Activated B cell treated with CpG ODN at 0.5 μM for 24 hours (primary cell): ENCODE measurements at regions of chr16 and their contacts with region 1.

Region 1: DNA sequence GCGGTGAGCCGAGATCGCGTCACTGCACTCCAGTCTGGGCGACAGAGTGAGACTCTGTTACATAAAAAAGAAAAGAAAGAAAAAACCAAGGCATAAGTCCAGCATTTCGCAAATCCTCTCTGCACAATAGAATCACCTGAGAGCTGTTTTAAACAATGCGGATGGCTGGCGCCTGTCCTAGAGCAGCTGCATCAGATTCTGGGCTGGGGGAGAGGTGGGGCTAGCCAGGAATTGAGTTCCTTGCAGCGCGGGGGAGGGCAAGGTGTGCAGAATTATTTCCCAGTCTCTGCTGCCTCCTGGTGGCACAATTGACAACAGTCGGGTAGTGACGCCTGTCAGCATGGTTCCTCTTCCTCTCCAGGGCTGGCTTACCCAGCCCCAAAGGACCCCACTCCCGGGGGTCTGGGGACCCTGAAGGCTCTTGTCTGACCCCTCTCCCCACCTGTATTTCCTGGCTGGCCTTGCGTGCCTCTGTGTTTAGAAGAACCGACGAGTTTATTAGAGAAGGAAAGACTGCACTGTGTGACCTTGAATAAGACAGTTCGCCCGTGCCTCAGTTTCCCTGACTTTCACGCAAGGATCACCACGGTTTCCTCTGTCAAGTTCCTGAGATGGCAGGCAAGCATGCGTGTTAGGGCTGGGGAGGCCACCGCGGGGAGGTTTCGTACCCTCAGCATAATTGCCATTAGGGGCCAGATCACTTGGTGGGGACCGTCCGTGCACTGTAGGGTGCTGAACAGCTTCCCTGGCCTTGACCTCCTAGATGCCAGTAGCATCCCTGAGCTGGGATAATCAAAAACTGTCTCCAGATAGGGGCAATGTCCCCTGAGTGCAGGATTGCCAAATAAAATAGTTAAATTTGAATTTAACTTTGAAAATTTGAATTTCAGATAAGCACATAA is 41.0 kb upstream of the PLCG2 start:
- DNase-seq: peak; percentile 75
- ATAC-seq: peak; percentile 58
- H3K4me3 Mint-ChIP-seq: peak overlapping the region; percentile 79
- H3K27ac Mint-ChIP-seq: peak overlapping the region; percentile 95
- H3K4me1 Mint-ChIP-seq: peaks cover 53% of the 10 kb centered on the region
- H3K27me3 Mint-ChIP-seq: no peaks in the 10 kb centered on the region
- CTCF ChIP-seq: no peak

Region 2: DNA sequence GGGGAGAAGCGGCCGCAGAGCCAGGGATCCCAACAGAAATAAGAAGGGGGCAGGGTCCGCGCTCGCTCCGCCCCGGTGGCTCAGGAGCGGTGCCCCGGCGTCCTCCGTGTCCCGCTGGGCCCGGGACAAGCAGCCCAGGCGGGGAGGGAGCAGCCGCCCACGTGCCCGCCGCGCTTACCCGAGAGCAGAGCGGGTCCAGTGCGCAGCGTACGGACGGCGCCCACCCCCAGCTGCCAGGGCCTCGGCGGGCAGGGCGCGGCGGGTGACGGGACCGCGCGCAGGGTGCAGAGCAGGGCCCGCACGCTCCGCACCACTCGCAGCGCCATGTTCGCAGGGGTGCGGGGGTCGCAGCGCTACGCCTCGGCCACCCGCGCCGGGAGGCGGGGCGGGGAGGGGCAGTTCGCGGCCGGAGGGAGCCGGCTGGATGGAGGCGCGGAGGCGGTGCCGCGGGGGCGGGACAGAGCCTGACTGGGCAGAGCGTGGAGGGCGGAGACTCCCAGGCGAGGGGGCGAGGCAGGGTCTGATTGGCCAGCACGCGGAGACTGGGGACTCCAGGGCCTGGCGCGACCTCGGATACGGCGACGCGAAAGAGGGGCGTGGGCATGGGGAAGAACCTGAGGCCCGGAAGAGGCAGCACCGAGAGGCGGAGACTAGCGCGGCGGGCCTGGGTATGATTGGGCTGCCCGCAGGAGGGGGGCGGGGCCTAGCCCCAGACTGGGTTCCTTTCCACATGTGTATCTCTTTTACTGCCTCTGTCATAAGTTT is 642.0 kb before region 1 on chr16 and contains the start of gene GCSH:
- CTCF ChIA-PET with region 1: no interaction called
- POLR2A ChIA-PET with region 1: no interaction called
- intact Hi-C with region 1: loop called (anchors 1 kb)
- DNase-seq: peak; percentile 97
- ATAC-seq: peak; percentile 97
- H3K4me3 Mint-ChIP-seq: peak within 1 kb of the TSS; percentile 83
- H3K27ac Mint-ChIP-seq: peak within 1 kb of the TSS; percentile 50
- H3K4me1 Mint-ChIP-seq: peaks cover 18% of the 10 kb centered on the region
- H3K27me3 Mint-ChIP-seq: no peaks in the 10 kb centered on the region
- CTCF ChIP-seq: no peak
- total RNA-seq, gene GCSH: 8.4 and 8.8 TPM in 2 replicates

Region 3: GRCh38 chr16:81505011-81505661 is 233.0 kb before region 1 on chr16:
- CTCF ChIA-PET with region 1: no interaction called
- POLR2A ChIA-PET with region 1: interaction called, 5 read pairs
- intact Hi-C with region 1: loop called (anchors 1 kb)
- DNase-seq: no peak
- ATAC-seq: peak; percentile 7
- H3K4me3 Mint-ChIP-seq: peak overlapping the region; percentile 67
- H3K27ac Mint-ChIP-seq: peak overlapping the region; percentile 92
- H3K4me1 Mint-ChIP-seq: peaks cover 76% of the 10 kb centered on the region
- H3K27me3 Mint-ChIP-seq: no peaks in the 10 kb centered on the region
- CTCF ChIP-seq: no peak

Region 4: DNA sequence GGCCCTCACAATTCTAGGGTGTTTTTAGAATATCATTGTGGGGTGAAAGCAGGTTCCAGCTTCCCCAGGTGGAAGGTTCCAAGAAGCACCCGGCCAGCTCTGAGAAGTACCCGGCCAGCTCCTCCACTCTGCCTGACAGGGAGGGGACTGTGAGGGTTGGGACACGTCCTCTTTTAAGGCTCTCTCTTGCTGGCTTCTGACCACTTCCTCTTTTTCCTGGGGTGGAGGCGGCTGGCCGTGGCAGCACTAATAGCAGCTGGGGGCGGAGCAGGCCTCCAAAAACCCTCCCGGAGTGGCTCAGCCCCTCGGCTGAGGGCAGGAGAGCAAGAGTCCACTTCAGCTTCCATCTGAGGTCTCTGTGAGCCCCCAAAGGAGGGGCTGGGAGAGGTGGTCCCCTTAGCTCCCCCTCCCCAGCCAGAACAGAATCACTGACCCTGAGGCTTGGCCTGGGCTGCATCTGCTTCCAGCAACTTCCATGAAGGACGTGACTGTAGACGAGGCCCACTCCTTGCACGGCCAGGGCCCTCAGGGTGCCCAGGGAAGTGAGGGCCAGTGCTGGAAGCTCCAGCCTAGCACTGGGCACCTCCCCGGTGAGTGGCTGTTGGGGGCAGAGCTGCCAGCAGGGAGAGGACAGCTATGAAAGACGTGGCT is 14.2 kb after region 1 on chr16:
- CTCF ChIA-PET with region 1: interaction called, 13 read pairs
- POLR2A ChIA-PET with region 1: interaction called, 124 read pairs
- intact Hi-C with region 1: loop called (anchors 1 kb)
- DNase-seq: peak; percentile 70
- ATAC-seq: peak; percentile 92
- H3K4me3 Mint-ChIP-seq: peak overlapping the region; percentile 46
- H3K27ac Mint-ChIP-seq: peak overlapping the region; percentile 82
- H3K4me1 Mint-ChIP-seq: peaks cover 82% of the 10 kb centered on the region
- H3K27me3 Mint-ChIP-seq: no peaks in the 10 kb centered on the region
- CTCF ChIP-seq: no peak

Region 5: DNA sequence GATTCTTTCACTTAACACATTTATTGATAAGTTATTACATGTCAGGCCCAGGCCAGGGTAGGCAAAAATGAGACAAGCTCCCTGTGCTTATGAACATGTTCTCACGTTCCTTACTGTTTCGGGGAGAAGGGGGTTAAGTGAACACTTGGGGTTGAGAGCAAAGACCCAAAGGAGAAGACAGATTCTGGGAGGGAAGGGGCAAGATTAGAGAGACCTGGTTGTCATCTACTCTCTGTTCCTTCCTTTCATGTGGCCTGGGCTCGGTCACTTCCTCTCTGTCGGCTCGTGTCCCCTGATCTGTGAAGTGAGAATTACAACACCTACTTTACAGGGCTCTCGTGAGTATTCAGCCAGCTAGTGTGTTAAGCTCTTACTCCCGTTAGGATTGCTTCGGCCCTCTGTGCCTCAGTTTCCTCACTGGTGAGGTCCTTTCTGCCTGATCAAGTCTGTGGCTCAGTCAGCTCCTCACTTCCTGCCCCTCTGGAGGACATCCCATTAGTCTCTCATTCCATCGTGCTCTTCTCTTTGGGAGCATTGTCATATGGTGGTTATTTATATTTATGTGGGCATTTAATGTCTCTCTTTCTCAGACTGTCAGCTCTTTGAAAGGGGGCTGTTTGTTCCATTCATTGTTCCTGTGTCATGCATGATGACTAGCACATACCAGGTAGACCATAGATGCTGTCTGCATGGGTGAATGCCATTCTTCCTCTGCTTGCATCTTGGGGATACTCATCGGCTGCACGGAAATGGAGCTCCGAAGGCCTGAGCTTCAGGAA is 79.8 kb after region 1 on chr16:
- CTCF ChIA-PET with region 1: interaction called, 7 read pairs
- POLR2A ChIA-PET with region 1: interaction called, 57 read pairs
- intact Hi-C with region 1: loop called (anchors 1 kb)
- DNase-seq: no peak
- ATAC-seq: peak; percentile 65
- H3K4me3 Mint-ChIP-seq: peak overlapping the region; percentile 66
- H3K27ac Mint-ChIP-seq: peak overlapping the region; percentile 96
- H3K4me1 Mint-ChIP-seq: peaks cover 98% of the 10 kb centered on the region
- H3K27me3 Mint-ChIP-seq: no peaks in the 10 kb centered on the region
- CTCF ChIP-seq: no peak